ENCODE measurements at regions of chr12 and their contacts with region 1.

Region 1: GRCh38 chr12:96501139-96501761 is 11.9 kb downstream of the CFAP54 start:
- DNase-seq: no peak

Region 2: GRCh38 chr12:96427269-96427729 is 74.0 kb before region 1 on chr12:
- intact Hi-C with region 1: loop called in 1 of 2 experiments (anchors 10 kb)
- DNase-seq: peak; percentile 88